Heart left ventricle (tissue), 16 donors: ENCODE measurements at regions of chrX and their contacts with region 1.

Region 1: DNA sequence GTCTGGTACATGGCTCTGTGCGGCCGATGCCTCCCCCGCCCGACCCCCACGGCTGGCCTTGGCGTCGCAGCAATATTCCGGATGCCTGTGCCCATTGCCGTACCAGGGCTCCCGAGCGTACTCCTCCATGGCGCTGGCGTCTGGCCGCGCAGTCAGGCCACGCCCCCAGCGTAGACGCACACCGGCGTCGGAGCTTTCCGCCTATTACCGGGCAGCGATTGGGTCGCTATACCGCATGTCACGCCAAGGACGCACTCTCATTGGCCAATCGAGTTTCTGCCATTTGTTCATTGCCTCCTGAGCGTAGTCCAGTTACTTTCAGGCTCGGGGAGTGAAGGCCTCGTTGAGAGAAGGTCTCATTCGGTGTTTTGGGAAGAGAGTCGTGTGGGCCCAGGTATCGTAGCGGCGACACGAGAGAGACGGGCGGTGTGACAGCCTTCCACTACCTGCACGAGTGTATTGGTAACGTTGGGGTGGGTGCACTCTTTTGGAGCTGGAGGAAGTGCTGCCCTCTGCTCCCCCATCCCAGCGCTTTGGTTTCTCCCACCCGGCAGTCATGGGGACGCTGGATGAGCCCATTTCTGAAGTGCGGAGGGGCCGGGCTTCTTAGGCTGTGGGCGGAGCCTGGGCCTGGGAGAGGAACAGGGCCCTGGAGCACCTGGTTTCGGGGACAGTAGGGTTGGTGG is at the starts of genes PQBP1 and TIMM17B:
- DNase-seq: peak; percentile 90 to 94 (median 92)
- ATAC-seq: peak; percentile 95 to 98 (median 96)
- H3K4me3 ChIP-seq: peak within 1 kb of the TSS; percentile 33 to 88 (median 77)
- H3K27ac ChIP-seq: peak within 1 kb of the TSS; percentile 89 to 97 (median 94)
- H3K4me1 ChIP-seq: peaks cover 0 to 20% (median 10%) of the 10 kb centered on the region in 12 donors
- H3K27me3 ChIP-seq: peaks cover 0 to 3% (median 0%) of the 10 kb centered on the region in 9 donors
- CTCF ChIP-seq: no peak
- POLR2A ChIP-seq: peak in 1 of 2 donors; percentile 86
- total RNA-seq, gene PQBP1: 45.3 to 67.0 (median 52.9) TPM
- total RNA-seq, gene TIMM17B: 57.1 to 86.9 (median 71.0) TPM

Region 2: GRCh38 chrX:48703642-48704481 is 193.9 kb before region 1 on chrX:
- intact Hi-C with region 1: loop called in 2 of 10 experiments (anchors 10 kb)
- DNase-seq: peak in 1 of 5 donors; percentile 42
- ATAC-seq: peak; percentile 70 to 79 (median 76)
- H3K4me3 ChIP-seq: no peak overlapping the region
- H3K27ac ChIP-seq: peak overlapping the region in 6 of 12 donors; percentile 5 to 69 (median 44)
- H3K4me1 ChIP-seq: peaks cover 0 to 13% (median 0%) of the 10 kb centered on the region in 12 donors
- H3K27me3 ChIP-seq: no peaks in the 10 kb centered on the region
- CTCF ChIP-seq: peak in 3 of 12 donors; percentile 7 to 18 (median 8)
- POLR2A ChIP-seq: no peak

Region 3: DNA sequence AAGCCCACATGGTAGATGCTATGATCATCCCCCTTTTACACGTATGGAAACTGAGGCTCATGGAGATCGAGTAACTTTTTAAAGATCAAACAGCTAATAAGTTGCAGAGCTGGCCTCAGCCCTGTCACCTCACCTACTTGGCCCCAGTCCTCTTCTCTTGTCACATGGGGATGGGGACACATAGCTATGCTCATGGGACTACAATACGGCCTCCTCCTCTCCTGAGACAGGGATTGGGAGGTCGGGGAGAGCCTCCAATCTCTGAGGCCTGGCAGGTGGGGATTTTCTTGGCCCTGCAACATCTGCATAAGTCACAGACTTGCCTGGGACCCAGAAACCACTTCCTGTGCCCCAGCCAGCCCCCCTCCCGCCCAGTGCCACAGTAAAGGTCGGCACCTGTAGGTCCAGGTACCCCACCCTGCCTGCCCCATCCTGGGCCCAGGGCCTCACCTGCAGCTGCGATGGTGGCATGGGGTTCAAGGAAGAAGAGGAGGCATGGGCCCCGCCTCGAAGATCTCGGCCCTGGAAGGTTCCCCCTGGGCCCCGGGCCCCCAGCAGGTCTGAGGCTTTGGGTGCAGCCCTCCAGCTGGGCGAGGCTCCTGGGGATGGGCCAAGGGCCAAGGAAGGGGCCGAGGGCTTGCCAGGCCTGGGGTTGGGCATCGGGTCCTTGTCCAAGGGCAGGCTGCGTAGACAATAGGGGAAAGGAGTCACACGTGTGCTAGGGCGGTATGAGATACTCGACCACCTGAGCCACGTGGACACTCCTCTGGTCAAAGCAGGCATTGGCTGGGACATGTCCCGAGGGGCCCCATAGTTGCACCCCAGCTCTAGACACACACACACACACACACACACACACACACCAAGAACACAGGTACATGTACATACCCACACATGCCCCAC is 360.3 kb after region 1 on chrX:
- intact Hi-C with region 1: no loop called
- DNase-seq: no peak
- ATAC-seq: no peak
- H3K4me3 ChIP-seq: no peak overlapping the region
- H3K27ac ChIP-seq: no peak overlapping the region
- H3K4me1 ChIP-seq: no peaks in the 10 kb centered on the region
- H3K27me3 ChIP-seq: peaks cover 0 to 14% (median 0%) of the 10 kb centered on the region in 9 donors
- CTCF ChIP-seq: no peak
- POLR2A ChIP-seq: no peak